AG04449 (cell line): ENCODE measurements at regions of chr12 and their contacts with region 1.

Region 1: GRCh38 chr12:75526655-75527511 is 15.5 kb upstream of the KRR1 start:
- DNase-seq: no peak
- H3K4me3 ChIP-seq: no peak overlapping the region
- CTCF ChIP-seq: peak; percentile 48

Region 2: DNA sequence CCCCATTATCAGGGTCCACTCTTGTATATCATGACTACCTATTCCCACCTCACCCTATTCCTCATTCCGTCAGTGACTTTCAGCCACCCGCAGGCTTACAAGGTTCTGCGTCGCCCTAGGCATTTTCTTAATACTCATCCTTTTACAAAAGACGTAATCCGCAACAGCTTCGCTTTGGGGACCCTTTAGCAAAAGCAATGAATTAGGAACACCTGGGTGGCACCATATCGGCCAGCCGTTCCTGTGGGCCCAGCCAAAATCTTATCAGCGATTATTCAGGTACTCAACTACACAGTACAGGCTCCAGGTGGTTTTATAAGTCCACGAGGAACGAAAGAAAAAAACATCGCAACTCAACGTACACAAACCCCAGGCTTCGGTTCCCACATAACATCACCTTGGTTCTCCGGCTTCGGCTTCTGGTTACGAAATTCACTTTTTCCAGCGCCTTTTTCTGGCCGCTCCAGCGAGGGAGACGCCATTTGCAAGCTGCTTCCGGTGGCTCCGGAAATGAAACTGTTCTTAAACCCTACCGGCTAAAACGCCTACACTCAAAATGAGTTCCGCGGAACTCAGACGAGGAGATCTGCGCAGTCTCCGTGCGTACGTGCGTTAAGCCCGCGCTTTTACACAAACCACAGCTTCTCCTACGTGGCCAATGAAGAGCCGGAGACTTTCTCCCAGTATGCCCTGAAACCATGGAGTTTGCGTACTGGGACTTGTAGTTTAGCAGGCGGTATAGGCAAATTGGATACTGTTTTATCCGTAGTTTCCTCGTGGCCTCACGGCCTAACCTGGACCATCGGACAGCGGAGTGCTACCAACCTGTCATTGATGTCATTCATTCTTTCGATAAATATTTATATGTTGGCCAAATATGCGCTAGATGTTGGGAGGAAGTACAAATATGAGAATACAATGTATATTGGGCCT is 15.5 kb before region 1 on chr12 and contains the start of gene KRR1:
- CTCF ChIA-PET with region 1: no interaction called
- POLR2A ChIA-PET with region 1: no interaction called
- DNase-seq: peak; percentile 93
- H3K4me3 ChIP-seq: peak within 1 kb of the TSS; percentile 83
- CTCF ChIP-seq: no peak

Region 3: DNA sequence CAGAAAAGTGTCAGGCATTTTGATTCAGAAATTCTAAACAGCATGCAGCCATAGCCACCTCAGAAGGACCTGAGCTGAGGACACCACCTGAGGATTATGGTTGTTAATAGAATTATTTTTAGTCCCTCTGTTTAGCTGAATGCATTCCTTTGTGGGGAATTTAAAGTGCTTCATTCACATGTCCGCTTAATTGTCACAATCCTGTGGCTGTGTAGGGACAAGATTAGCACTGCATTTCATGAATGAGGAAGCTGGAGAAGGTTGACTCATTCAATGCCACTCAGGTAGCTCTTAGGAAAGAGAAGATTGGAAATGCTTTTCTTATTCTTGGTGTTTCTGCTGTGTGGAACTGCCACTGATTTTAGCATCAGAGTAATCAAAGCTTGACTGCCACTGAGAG is 26.5 kb after region 1 on chr12:
- CTCF ChIA-PET with region 1: interaction called, 13 read pairs
- POLR2A ChIA-PET with region 1: no interaction called
- DNase-seq: no peak
- H3K4me3 ChIP-seq: no peak overlapping the region
- CTCF ChIP-seq: no peak

Region 4: GRCh38 chr12:76031537-76032073 is 504.7 kb after region 1 on chr12 and contains the start of gene PHLDA1:
- CTCF ChIA-PET with region 1: interaction called, 130 read pairs
- POLR2A ChIA-PET with region 1: interaction called, 6 read pairs
- DNase-seq: peak; percentile 79
- H3K4me3 ChIP-seq: peak within 1 kb of the TSS; percentile 95
- CTCF ChIP-seq: peak; percentile 74

Region 5: GRCh38 chr12:76348079-76348901 is 821.4 kb after region 1 on chr12 and contains the start of gene BBS10:
- CTCF ChIA-PET with region 1: interaction called, 18 read pairs
- POLR2A ChIA-PET with region 1: no interaction called
- DNase-seq: peak; percentile 31
- H3K4me3 ChIP-seq: peak within 1 kb of the TSS; percentile 84
- CTCF ChIP-seq: peak; percentile 59